ENCODE measurements at regions of chr9 and their contacts with region 1.

Region 1: DNA sequence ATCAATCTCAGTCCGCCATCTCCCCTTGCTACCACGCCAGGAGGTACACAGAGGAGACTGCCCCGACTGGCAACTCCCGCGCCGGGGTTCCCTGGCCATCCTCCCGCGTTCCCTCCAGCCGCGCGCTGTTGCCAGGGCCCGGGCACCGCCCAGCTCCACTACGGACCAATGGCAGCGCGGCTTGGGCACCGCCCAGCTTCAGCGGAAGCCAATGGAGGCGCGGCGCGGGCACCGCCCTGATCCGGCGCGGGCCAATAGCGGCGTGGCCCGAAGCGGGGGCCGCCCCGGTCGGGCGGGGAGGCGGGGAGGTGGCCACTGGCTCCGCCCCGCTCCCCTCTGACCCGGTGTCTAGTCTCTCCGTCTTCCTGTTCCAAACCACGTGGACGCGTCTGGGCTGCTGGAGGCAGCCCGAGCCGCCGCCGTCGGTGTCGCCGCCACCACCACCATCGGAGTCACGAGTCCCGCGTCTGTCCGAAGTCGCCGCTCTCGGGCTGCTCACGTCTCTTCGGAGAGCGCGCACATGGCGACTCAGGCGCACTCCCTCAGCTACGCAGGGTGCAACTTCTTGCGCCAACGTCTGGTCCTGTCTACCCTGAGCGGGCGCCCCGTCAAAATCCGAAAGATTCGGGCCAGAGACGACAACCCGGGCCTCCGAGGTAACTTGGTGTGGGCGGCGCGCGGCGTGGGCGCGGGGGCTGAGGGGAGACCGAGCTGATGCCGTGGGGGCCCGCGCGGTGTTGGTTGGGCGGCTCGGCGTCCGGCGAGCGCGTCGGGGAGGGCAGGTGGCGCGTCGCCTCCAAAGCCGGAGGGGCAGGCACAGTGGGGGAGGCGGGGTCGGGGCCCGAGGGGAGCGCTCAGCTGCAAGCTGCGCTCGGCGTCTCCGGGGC is at the start of gene RCL1:
- DNase-seq: peak; percentile 96
- ATAC-seq: peak; percentile 94
- H3K4me3 Mint-ChIP-seq: peak within 1 kb of the TSS; percentile 96
- H3K27ac Mint-ChIP-seq: peak within 1 kb of the TSS; percentile 95
- H3K4me1 Mint-ChIP-seq: peaks cover 48% of the 10 kb centered on the region
- H3K27me3 Mint-ChIP-seq: peaks cover under 1% of the 10 kb centered on the region
- CTCF ChIP-seq: no peak
- total RNA-seq, gene RCL1: 24.5 to 28.6 TPM

Region 2: DNA sequence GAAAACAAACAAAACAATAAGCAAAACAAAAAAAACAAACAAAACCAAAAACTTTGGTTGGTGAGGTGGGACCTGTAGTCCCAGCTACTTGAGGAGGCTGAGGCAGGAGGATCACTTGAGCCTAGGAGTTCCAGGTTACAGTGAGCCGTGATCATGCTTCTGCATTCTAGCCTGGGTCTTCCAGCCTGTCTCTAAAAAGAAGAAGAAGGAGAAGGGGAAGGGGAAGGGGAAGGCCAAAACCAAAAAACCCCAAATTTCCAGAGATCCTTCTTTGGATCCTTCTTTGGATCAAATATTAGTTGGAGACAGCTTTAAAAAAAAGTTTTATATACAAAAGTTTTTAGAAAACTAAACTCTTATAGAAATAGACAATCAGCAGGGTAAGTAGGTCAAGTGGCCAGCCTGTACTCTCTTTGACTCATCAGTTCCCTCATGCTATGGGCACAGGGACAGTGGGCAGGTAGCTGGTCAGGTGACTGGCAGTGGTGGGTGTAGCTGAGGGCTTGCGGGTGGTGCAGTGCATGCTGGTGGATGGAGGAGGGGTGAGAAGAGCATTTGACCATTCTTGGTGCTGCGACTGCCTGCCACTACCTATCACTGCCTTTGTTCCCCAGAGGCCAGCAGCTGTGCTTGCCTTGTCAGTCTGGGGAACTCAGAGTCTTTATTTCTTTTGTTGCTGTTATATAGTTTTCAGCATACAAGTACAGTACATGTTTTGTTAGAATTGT is 12.5 kb after region 1 on chr9:
- CTCF ChIA-PET with region 1: interaction called, 3 read pairs
- POLR2A ChIA-PET with region 1: interaction called, 12 read pairs
- intact Hi-C with region 1: no loop called
- DNase-seq: no peak
- ATAC-seq: no peak
- H3K4me3 Mint-ChIP-seq: no peak overlapping the region
- H3K27ac Mint-ChIP-seq: no peak overlapping the region
- H3K4me1 Mint-ChIP-seq: peaks cover 29% of the 10 kb centered on the region
- H3K27me3 Mint-ChIP-seq: no peaks in the 10 kb centered on the region
- CTCF ChIP-seq: no peak

Region 3: DNA sequence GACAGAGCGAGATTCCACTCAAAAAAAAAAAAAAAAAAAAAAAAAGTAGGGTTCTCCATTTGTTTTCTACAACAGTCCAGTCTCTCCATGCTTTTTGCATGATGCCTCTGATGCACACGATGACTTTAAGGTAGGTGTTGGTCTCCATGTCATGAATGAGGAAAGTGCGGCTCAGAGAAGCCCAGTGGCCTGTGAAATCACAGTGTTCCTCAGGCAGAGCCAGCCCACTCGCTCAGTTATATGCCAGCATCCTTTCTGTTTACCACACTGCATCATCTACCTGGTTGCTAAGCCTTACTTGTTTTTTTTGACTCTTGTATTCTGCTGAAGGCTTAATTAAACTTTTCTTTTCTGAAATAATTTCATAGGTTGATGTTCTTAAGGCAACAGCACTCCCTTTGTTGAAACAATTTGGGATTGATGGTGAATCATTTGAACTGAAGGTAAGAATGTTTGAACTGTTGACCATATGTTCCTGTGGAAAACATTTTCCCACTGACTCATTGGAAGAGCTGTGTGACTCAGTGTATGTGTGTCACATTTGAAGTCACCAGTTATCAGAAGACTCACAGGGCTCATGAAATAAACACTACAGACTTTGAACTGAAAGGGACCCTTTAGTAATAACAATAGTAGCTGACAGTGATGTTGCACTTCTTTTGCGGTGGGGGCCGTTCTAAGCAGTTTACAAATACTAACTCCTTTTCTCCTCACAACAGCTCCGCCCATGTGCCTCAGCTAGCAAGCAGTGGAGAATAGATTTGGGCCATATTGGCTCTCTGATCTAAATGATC is 40.2 kb after region 1 on chr9:
- CTCF ChIA-PET with region 1: interaction called, 5 read pairs
- POLR2A ChIA-PET with region 1: interaction called, 3 read pairs
- intact Hi-C with region 1: loop called (anchors 5 kb)
- DNase-seq: peak; percentile 79
- ATAC-seq: peak; percentile 90
- H3K4me3 Mint-ChIP-seq: no peak overlapping the region
- H3K27ac Mint-ChIP-seq: peak overlapping the region; percentile 89
- H3K4me1 Mint-ChIP-seq: peaks cover 44% of the 10 kb centered on the region
- H3K27me3 Mint-ChIP-seq: no peaks in the 10 kb centered on the region
- CTCF ChIP-seq: no peak

Region 4: DNA sequence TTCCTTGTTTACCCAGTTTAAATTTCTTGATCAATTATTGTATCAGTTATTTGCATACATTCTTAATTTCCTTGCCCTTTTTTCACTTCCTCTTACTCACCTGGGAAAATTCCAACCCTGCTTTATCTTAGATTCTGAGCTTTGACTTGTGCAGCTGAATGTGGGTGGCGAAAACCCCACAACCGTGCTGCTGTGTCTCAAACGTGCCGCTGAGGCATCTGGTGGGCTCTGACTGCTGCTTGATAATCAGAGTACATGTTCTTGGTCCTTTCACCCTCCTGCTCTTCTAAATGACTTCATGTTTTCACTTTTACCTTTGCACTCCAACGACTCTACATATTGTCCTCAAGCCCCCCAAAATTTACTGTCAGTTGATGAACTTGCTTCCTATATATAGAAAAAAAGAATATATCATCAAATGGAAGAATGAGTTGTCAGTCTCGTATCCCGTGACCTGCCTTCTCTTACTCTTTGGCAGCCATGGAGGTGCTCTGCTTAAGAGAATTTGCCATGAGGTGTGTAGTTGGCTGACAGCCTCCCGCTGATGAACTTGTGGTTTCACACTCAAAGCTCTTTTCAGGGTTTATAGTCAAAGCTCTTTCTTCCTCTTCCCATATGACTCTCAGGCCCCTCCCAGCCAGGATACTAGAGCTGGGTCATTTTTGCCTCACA is 178.3 kb after region 1 on chr9:
- CTCF ChIA-PET with region 1: interaction called, 5 read pairs
- POLR2A ChIA-PET with region 1: interaction called, 10 read pairs
- intact Hi-C with region 1: no loop called
- DNase-seq: peak; percentile 89
- ATAC-seq: peak; percentile 86
- H3K4me3 Mint-ChIP-seq: no peak overlapping the region
- H3K27ac Mint-ChIP-seq: no peak overlapping the region
- H3K4me1 Mint-ChIP-seq: peaks cover 30% of the 10 kb centered on the region
- H3K27me3 Mint-ChIP-seq: no peaks in the 10 kb centered on the region
- CTCF ChIP-seq: no peak